ENCODE measurements at regions of chr17 and their contacts with region 1.

Region 1: DNA sequence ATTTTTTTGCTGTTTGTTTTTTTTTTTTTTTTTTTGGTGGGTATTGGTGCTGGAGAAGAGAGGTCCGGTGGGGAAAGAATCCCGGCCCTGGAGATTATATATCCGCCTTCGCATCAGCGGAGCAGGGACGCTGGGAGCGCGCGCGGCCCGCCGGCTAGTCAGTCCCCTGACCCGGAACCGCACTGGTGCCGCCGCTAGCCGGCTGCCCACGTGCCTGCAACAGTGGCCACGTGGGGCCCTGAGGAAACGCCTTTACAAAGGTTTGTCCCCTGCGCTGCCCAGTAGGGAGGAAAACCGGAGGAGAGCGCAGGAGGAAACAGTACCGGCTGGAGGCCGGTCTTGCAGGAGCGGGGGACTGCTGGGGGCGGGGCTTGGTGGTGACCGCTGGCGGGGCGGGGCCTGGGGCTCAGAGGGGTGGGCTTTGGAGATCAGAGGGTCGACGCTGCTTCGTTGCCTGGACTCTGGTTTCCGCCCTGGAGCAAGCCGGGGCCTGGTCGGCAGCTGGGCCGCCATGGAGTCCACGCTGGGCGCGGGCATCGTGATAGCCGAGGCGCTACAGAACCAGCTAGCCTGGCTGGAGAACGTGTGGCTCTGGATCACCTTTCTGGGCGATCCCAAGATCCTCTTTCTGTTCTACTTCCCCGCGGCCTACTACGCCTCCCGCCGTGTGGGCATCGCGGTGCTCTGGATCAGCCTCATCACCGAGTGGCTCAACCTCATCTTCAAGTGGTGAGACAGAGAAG is at the start of gene G6PC3:
- DNase-seq: peak; percentile 98
- H3K4me3 ChIP-seq: peak within 1 kb of the TSS; percentile 71
- H3K27ac ChIP-seq: peak within 1 kb of the TSS; percentile 90
- H3K4me1 ChIP-seq: peaks cover 5% of the 10 kb centered on the region
- H3K27me3 ChIP-seq: no peaks in the 10 kb centered on the region
- CTCF ChIP-seq: no peak
- total RNA-seq, gene G6PC3: 28.3 to 44.7 TPM

Region 2: GRCh38 chr17:43994272-43995149 is 76.1 kb before region 1 on chr17:
- intact Hi-C with region 1: no loop called
- DNase-seq: peak; percentile 60
- H3K4me3 ChIP-seq: peak overlapping the region; percentile 3
- H3K27ac ChIP-seq: no peak overlapping the region
- H3K4me1 ChIP-seq: no peaks in the 10 kb centered on the region
- H3K27me3 ChIP-seq: peaks cover 15% of the 10 kb centered on the region
- CTCF ChIP-seq: peak; percentile 82

Region 3: GRCh38 chr17:44038604-44039011 is 32.0 kb before region 1 on chr17:
- intact Hi-C with region 1: no loop called
- DNase-seq: no peak
- H3K4me3 ChIP-seq: no peak overlapping the region
- H3K27ac ChIP-seq: no peak overlapping the region
- H3K4me1 ChIP-seq: no peaks in the 10 kb centered on the region
- H3K27me3 ChIP-seq: no peaks in the 10 kb centered on the region
- CTCF ChIP-seq: no peak

Region 4: GRCh38 chr17:44110823-44111633 is 40.4 kb after region 1 on chr17:
- intact Hi-C with region 1: loop called (anchors 5 kb)
- DNase-seq: peak; percentile 99
- H3K4me3 ChIP-seq: peak overlapping the region; percentile 31
- H3K27ac ChIP-seq: peak overlapping the region; percentile 77
- H3K4me1 ChIP-seq: peaks cover 19% of the 10 kb centered on the region
- H3K27me3 ChIP-seq: no peaks in the 10 kb centered on the region
- CTCF ChIP-seq: no peak

Measured in colonic mucosa (tissue), 4 donors.